ENCODE measurements at regions of chr9 and their contacts with region 1.

Region 1: DNA sequence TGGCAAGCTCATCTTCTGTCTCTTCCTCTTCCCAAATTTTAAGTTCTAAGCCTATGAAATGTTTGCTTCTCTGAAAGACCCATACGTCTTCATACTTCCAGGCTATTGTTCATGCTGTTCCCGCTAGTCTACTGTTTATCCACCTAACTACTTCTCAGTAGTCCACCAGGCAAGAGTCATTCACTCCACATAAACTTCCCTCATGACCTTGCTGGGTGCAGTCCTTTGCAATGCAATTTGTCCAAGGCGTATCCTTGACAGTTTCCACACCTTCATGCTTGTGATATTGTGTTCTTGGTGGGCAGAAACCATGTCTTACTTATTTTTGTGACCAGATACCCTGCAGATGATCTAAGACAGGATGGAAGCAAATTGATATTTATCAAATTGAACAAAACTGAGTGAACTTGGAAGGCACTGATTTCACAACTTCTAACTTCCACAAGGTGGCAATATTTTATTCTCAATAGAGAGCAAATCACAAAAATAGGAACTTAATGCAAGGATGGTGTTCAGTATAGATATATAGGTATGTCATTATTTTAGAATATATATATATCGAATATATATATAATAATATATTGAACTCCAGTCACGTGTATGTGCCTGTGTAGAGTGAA is 30.3 kb downstream of the TYRP1 start:
- H3K4me3 Mint-ChIP-seq: no peak overlapping the region
- H3K27ac Mint-ChIP-seq: no peak overlapping the region
- H3K4me1 Mint-ChIP-seq: no peaks in the 10 kb centered on the region
- H3K27me3 Mint-ChIP-seq: no peaks in the 10 kb centered on the region

Region 2: DNA sequence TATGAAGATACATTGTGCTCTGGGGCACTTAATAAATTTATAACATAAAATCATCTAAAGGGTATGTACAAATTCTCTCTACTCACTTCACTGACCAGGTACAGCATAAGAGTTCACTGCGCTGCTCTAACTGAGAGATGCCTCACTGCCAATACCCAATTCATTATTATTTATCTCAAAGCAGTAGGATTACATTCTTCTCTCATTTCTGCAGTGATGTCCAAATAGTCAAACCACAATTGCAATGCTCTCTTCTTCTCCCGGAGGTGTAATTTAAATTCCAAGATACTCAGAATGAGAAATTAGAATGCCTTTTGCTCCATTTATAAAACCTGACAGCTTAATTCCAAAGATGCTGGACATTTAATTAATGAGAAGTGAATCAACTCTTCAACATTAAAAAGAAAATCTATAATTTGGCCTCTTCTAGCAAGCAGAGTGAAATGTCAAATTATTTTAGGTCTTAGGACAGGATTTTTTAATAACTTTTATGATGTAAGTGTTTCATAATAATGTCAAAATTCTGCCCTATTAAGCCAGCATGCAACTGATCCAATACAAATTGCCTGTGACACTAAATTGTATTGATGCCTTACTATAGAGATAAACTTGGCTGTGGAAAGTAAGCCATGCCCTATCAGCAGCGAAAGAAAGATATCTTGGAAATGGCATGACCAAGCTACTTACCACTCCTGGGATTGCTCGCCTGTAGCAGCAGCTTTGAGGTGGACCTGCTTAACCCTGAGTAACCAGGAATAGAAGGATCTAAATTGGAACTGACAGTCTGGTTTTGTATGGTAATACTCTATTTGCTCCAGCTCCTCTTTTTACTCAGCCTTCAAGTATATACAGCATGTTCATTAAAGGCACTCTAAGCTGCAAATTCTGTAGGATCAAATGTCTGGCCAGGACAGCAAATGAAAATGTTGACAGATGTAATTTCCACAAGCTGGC is 404.5 kb before region 1 on chr9:
- intact Hi-C with region 1: no loop called
- H3K4me3 Mint-ChIP-seq: no peak overlapping the region
- H3K27ac Mint-ChIP-seq: no peak overlapping the region
- H3K4me1 Mint-ChIP-seq: no peaks in the 10 kb centered on the region
- H3K27me3 Mint-ChIP-seq: no peaks in the 10 kb centered on the region

Region 3: DNA sequence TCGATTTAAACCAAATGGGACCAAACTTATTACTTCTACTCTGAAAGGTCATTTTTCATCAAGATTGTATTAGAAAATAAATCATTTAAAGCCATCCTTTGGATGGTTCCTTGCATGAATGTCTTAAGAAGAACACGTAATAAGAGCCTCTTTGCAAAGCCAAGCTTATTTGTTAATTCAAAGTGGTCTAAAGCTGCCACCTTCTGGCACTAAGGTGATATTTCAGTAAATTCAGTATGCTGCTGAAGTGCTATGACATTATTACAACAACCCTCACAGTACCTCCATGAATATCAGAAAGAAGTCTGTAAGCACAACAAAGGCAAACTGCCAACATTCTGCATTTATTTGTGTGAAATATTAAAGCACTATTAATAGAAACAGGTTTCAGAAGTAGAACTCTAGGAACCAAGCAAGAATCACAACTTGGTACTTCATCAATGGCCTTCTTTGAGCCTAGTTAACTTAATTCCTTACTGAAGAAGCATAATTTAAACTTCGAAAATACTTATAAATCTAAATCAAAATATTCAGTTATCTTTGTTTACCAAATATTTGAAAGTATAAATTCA is 83.4 kb before region 1 on chr9:
- intact Hi-C with region 1: no loop called
- H3K4me3 Mint-ChIP-seq: no peak overlapping the region
- H3K27ac Mint-ChIP-seq: no peak overlapping the region
- H3K4me1 Mint-ChIP-seq: no peaks in the 10 kb centered on the region
- H3K27me3 Mint-ChIP-seq: no peaks in the 10 kb centered on the region

Region 4: GRCh38 chr9:12708562-12709298 is 14.8 kb before region 1 on chr9:
- intact Hi-C with region 1: no loop called
- H3K4me3 Mint-ChIP-seq: no peak overlapping the region
- H3K27ac Mint-ChIP-seq: no peak overlapping the region
- H3K4me1 Mint-ChIP-seq: no peaks in the 10 kb centered on the region
- H3K27me3 Mint-ChIP-seq: no peaks in the 10 kb centered on the region

Region 5: GRCh38 chr9:12759761-12760160 is 36.2 kb after region 1 on chr9:
- intact Hi-C with region 1: no loop called
- H3K4me3 Mint-ChIP-seq: no peak overlapping the region
- H3K27ac Mint-ChIP-seq: no peak overlapping the region
- H3K4me1 Mint-ChIP-seq: no peaks in the 10 kb centered on the region
- H3K27me3 Mint-ChIP-seq: no peaks in the 10 kb centered on the region

Region 6: DNA sequence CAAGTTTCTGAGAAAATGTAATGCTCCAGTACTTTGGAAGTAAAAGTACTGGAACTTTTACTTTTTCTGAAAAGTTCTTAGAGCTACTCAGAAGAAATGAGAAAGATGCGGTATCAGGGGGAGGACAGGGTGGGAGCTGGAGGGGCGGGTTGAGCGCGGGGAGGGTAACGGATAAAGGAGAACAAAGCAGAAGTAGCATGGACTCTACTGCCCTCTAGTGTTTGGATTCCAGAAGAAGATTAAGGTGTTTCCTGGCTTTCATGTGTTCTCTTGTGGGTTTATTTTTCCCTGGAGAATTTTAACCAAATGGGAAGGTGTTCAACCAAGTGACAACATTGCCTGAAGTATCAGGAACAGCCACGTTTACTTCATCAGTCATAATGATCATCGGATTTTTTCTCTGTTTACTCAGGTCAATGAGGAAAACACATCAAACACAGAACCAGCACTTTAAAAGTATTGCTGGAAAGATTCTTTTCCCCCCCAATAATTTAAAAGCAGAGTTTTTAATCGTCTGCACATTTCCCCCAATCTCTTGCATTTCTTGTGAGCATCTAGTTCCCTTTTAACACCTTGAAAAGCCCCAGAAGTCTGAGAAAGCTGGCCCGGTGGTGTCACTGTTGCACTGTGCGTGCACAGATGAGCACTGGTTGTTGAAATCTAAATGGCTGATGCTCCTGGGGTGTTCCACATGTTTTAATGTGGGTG is 365.4 kb after region 1 on chr9:
- intact Hi-C with region 1: loop called (anchors 5 kb)
- H3K4me3 Mint-ChIP-seq: no peak overlapping the region
- H3K27ac Mint-ChIP-seq: no peak overlapping the region
- H3K4me1 Mint-ChIP-seq: no peaks in the 10 kb centered on the region
- H3K27me3 Mint-ChIP-seq: no peaks in the 10 kb centered on the region

Measured in dendritic cell treated with granulocyte-macrophage colony-stimulating factor and Interleukin-4, amounts not matched to agents 40 ng/mL and 50 ng/mL, for 4 days (primary cell).